Activated B cell treated with CpG ODN at 0.5 μM for 24 hours (primary cell): ENCODE measurements at regions of chr3 and their contacts with region 1.

Region 1: GRCh38 chr3:128426128-128426921 is 40.4 kb downstream of the DNAJB8 start:
- DNase-seq: peak; percentile 66
- ATAC-seq: peak; percentile 98
- H3K4me3 Mint-ChIP-seq: no peak overlapping the region
- H3K27ac Mint-ChIP-seq: no peak overlapping the region
- H3K4me1 Mint-ChIP-seq: no peaks in the 10 kb centered on the region
- H3K27me3 Mint-ChIP-seq: peaks cover 22% of the 10 kb centered on the region
- CTCF ChIP-seq: no peak

Region 2: DNA sequence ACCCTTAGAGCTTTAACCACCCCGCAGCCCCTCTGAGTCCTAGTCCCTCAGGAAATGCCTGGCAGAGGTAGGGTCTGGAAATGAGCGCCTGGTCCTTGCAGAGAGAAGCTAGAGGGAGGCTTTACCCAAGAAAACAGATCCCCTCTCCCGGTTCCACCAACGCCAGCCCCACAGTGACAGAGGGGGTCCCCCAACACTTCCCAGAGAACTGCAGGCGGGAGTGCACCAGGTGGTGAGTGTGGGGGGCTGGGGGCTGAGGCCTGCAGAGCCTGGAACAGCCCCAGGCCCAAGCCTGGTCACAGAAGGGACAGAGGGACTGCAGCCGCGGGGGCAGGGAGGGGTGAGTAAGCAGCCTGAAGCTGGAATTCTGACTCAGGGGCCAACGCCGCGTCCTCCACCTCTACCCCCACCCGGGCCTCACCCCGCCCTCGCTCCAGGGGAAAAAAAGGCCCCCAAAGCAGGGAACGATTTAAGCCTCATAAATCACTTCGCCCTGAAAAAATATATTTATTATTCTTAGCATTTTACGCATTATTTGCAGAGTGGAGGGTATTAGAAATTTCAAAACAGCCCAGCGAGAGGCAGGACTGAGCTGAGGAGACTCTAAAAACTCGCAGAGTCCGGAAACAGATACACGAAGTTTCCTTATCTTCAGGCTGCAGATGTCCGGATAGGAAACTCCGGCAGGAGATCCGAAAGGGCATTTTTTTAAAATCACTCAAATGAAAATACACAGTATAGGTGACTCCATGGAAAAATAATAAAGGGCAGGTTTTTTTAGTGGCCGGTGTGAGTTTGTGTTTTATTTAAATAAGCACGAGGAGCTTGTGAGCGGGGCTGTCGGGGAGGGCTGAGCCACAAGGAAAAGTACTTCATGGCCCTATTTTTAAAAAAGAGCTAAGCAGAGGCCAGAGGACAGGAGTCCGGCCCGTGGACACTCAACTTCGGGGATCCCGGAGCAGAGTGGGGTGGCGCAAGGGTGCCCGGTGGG is 56.6 kb after region 1 on chr3:
- CTCF ChIA-PET with region 1: no interaction called
- POLR2A ChIA-PET with region 1: no interaction called
- intact Hi-C with region 1: no loop called
- DNase-seq: no peak
- ATAC-seq: no peak
- H3K4me3 Mint-ChIP-seq: peak overlapping the region; percentile 68
- H3K27ac Mint-ChIP-seq: no peak overlapping the region
- H3K4me1 Mint-ChIP-seq: peaks cover 29% of the 10 kb centered on the region
- H3K27me3 Mint-ChIP-seq: peaks cover 75% of the 10 kb centered on the region
- CTCF ChIP-seq: no peak

Region 3: GRCh38 chr3:128497387-128498126 is 71.2 kb after region 1 on chr3:
- CTCF ChIA-PET with region 1: interaction called, 5 read pairs
- POLR2A ChIA-PET with region 1: no interaction called
- intact Hi-C with region 1: loop called (anchors 1 kb)
- DNase-seq: peak; percentile 62
- ATAC-seq: peak; percentile 52
- H3K4me3 Mint-ChIP-seq: peak overlapping the region; percentile 74
- H3K27ac Mint-ChIP-seq: no peak overlapping the region
- H3K4me1 Mint-ChIP-seq: peaks cover 9% of the 10 kb centered on the region
- H3K27me3 Mint-ChIP-seq: peaks cover 60% of the 10 kb centered on the region
- CTCF ChIP-seq: no peak

Region 4: GRCh38 chr3:128584412-128585020 is 158.2 kb after region 1 on chr3:
- CTCF ChIA-PET with region 1: no interaction called
- POLR2A ChIA-PET with region 1: no interaction called
- intact Hi-C with region 1: loop called (anchors 1 kb)
- DNase-seq: no peak
- ATAC-seq: peak; percentile 80
- H3K4me3 Mint-ChIP-seq: no peak overlapping the region
- H3K27ac Mint-ChIP-seq: no peak overlapping the region
- H3K4me1 Mint-ChIP-seq: no peaks in the 10 kb centered on the region
- H3K27me3 Mint-ChIP-seq: peaks cover 11% of the 10 kb centered on the region
- CTCF ChIP-seq: no peak

Region 5: GRCh38 chr3:128607710-128608048 is 181.4 kb after region 1 on chr3:
- CTCF ChIA-PET with region 1: interaction called, 8 read pairs
- POLR2A ChIA-PET with region 1: no interaction called
- intact Hi-C with region 1: loop called (anchors 1 kb)
- DNase-seq: no peak
- ATAC-seq: no peak
- H3K4me3 Mint-ChIP-seq: peak overlapping the region; percentile 24
- H3K27ac Mint-ChIP-seq: no peak overlapping the region
- H3K4me1 Mint-ChIP-seq: peaks cover 2% of the 10 kb centered on the region
- H3K27me3 Mint-ChIP-seq: no peaks in the 10 kb centered on the region
- CTCF ChIP-seq: no peak

Region 6: DNA sequence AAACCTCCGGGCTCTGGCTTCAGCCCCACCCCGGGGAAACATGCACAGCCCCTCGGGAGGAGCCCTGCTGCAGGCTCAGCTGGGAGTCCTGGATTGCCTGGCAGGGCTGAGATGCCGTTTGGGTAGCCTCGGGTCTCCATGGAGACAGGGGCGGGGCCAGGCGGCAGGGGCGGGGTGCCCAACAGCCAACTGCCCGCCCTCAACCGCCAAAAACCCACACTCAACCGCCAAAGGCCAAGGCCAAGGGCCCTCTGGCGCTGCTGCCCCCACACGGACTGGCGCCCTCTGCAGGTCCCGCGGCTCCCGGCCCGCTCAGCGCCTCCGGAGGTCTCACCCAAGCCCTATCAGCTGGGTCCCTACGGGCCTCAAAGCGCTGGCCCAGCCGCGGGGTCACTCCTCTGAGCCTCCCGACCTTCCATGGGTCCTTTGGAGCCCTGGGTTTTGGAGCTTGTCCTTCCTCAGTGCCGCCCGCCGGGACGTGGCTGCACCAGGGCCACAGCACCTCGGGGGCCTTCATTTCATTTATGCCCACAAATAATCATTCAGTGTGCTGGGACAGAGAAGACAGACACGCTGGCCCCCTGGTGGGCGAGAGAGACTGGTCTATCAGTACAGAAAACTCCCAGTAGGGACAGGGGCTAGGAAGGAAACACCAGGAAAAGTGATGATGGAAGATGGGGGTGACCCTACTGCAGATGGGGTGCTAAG is 419.6 kb after region 1 on chr3:
- CTCF ChIA-PET with region 1: interaction called, 3 read pairs
- POLR2A ChIA-PET with region 1: no interaction called
- intact Hi-C with region 1: loop called (anchors 2 kb)
- DNase-seq: peak; percentile 72
- ATAC-seq: peak; percentile 87
- H3K4me3 Mint-ChIP-seq: peak overlapping the region; percentile 88
- H3K27ac Mint-ChIP-seq: peak overlapping the region; percentile 36
- H3K4me1 Mint-ChIP-seq: peaks cover 10% of the 10 kb centered on the region
- H3K27me3 Mint-ChIP-seq: no peaks in the 10 kb centered on the region
- CTCF ChIP-seq: no peak